ENCODE measurements at regions of chr18 and their contacts with region 1.

Region 1: DNA sequence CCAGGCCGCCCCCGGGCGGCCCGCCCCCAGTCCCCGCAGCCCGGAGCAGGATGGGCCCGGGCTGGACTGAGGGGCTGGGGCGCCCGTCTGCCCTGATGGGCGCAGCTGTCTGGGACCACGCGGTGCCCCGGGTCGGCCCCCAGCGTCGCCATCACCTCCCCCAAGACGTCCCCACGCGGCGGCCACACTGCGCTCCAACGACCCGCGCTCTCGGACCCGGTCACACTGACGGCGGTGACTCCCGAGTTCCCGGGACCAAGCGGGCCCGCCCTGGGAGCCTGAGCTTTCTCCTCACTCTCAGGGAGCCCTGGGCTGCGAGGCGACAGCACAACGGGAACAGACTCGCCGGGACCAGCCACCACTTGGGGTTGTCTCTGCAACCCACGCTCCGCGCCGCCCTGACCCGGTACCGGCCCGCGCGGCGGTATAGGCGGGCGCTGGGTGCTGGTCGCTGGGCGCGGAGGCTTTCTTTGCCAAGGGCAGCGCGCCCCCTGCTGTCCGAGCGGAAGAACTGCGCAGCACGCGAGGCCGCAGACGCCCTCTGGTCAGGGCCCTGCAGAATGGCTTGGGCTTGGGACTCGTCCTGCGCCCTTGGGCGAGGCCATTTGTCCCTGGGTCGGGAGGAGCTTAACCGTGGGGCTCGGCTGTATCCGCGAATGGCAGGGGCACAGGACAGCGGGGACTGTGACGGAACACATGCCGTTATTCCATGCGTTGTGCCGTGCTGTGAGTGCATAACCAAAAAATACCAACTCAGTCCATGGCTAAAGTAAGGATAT is 54.8 kb upstream of the ANKRD62 start:
- DNase-seq: no peak
- H3K4me3 ChIP-seq: peak overlapping the region; percentile 63
- CTCF ChIP-seq: peak; percentile 95

Region 2: DNA sequence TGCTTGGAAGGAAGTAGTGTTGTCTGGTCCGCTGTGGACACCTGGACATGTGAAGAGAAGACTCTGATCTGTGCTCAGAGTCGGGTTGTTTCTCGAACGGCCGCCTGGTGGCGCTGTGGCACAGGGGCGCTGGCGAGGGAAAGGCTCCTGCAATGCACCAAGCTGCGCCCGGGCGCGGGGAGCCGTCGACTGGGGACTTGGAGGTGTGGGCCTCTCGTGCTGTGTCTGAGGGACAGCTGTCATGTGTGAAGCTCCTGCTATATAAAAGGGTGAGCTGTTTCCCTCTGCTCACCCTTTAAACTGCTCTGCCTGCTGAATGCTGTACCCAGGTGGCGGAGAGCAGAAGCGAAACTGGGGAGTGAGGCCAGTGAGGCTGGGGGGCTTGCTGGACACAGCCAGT is 305.8 kb before region 1 on chr18:
- CTCF ChIA-PET with region 1: interaction called, 57 read pairs
- POLR2A ChIA-PET with region 1: no interaction called
- DNase-seq: no peak
- H3K4me3 ChIP-seq: peak overlapping the region; percentile 44
- CTCF ChIP-seq: peak; percentile 93

Region 3: DNA sequence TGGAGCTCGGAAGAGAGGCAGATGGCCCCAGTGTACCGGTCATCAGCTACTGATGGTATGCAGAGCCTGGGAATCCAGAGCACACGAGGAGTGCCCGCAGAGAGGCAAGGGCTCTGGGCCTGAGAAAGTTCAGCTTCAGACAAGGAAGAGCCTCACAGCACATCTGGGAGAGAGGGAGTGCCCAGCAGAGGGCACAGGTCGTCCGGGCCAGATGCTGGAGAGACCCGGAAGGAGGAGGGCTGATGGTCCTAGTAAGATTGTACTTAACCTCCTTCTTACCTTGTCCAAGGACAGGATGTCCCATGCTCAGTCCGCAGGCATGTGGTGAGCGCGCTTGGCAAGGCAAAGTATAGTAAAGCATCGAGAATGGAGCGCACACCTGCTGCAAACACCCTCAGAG is 212.0 kb before region 1 on chr18:
- CTCF ChIA-PET with region 1: no interaction called
- POLR2A ChIA-PET with region 1: no interaction called
- DNase-seq: no peak
- H3K4me3 ChIP-seq: no peak overlapping the region
- CTCF ChIP-seq: no peak

Region 4: GRCh38 chr18:11925800-11926481 is 112.9 kb before region 1 on chr18:
- CTCF ChIA-PET with region 1: interaction called, 19 read pairs
- POLR2A ChIA-PET with region 1: no interaction called
- DNase-seq: no peak
- H3K4me3 ChIP-seq: no peak overlapping the region
- CTCF ChIP-seq: no peak

Region 5: DNA sequence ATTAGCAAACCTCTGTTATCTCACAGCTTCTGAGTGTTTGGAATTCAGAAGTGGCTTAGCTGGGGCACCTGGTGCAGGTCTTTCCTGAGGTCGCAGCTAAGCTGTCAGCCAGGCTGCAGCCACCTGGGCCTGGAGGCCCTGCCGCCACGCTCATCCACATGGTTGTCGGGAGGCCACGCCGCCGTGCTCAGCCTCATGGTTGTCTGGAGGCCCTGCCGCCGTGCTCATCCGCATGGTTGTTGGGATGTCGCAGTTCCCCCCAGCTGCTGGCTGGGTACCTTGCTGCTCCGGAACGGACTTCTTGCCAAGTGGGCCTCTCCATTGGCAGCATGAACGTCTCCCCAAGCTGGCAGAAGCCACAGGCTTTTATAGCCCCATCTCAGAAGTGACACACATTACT is 106.4 kb before region 1 on chr18:
- CTCF ChIA-PET with region 1: interaction called, 145 read pairs
- POLR2A ChIA-PET with region 1: no interaction called
- DNase-seq: no peak
- H3K4me3 ChIP-seq: no peak overlapping the region
- CTCF ChIP-seq: no peak

Region 6: GRCh38 chr18:11947214-11948191 is 91.3 kb before region 1 on chr18:
- CTCF ChIA-PET with region 1: interaction called, 145 read pairs
- POLR2A ChIA-PET with region 1: no interaction called
- DNase-seq: peak; percentile 94
- H3K4me3 ChIP-seq: peak overlapping the region; percentile 37
- CTCF ChIP-seq: no peak

Region 7: GRCh38 chr18:12049978-12050811 is 11.4 kb after region 1 on chr18:
- CTCF ChIA-PET with region 1: interaction called, 38 read pairs
- POLR2A ChIA-PET with region 1: no interaction called
- DNase-seq: no peak
- H3K4me3 ChIP-seq: no peak overlapping the region
- CTCF ChIP-seq: no peak

Region 8: GRCh38 chr18:12155996-12156395 is 117.2 kb after region 1 on chr18:
- CTCF ChIA-PET with region 1: no interaction called
- POLR2A ChIA-PET with region 1: no interaction called
- DNase-seq: no peak
- H3K4me3 ChIP-seq: no peak overlapping the region
- CTCF ChIP-seq: no peak

Measured in AG04449 (cell line).